ENCODE measurements at regions of chr12 and their contacts with region 1.

Region 1: DNA sequence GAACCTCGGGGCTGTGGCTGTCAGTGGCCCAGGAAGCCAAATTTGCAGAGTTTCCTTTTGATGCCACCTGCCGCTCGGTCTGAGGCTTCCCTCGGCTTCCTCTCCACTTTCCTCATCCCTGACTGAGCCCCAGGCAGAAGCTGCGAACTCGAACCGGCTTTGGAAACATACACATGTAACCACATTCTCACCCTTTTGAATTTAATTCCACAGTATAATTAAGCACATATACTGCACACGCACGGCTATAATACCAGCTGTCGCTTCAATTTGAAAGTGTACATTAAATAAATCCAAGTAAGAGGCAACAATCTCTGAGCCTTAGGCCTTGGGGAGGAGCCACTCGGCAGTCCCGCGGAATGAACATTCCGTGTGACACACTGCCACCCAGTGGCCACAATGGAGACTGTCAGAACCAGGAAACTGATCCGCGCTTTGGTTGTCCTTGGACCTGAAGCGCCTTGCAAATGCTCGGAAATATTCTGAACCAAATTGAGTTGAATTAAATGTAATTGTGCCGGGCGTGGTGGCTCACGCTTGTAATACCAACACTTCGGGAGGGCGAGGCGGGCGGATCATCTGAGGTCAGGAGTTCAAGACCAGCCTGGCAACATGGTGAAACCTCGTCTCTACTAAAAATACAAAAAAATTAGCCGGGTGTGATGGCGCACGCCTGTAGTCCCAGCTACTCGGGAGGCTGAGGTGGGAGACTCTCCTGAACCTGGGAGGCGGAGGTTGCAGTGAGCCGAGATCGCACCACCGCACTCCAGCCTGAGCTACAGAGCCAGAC is 117.9 kb upstream of the TMPO start:
- DNase-seq: peak; percentile 84
- H3K4me3 ChIP-seq: peak overlapping the region in 2 of 3 experiments; percentile 28 to 35
- H3K27ac ChIP-seq: no peak overlapping the region
- H3K4me1 ChIP-seq: peaks cover 39% of the 10 kb centered on the region
- H3K27me3 ChIP-seq: no peaks in the 10 kb centered on the region
- CTCF ChIP-seq: peak; percentile 76 to 84
- POLR2A ChIP-seq: no peak

Region 2: DNA sequence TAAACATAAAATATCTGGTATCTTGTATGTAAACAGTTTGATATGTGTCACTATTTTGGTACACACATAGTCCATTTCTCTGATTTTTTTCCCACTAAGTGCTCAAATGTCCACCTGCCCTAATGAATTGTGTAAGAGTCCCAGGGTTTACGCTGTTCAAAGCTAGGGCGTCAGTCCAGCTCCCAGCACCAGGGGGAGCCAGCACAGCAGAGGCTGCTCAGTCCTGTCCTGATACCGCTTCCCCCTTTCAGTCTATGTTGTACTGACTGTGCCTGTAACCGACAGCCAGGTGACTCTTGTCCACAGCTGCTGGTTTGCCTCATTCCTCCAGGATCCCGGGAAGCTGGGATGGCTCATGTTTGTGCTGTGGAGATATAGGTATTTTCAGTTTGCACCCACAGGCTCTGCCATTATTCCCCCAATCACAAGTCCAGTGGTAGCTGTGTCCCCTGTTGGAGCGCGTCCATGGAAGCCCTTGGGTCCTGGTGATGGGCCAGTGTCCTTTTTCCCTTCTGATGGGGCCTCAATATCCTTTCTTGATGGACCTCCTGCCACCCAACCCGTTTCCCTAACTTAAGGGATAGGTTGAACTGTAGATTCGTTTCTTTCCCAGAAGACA is 1248.5 kb before region 1 on chr12:
- CTCF ChIA-PET with region 1: interaction called, 10 read pairs
- POLR2A ChIA-PET with region 1: no interaction called
- dilution Hi-C with region 1: no loop called
- intact Hi-C with region 1: loop called (anchors 2 kb)
- DNase-seq: peak; percentile 31
- H3K4me3 ChIP-seq: no peak overlapping the region
- H3K27ac ChIP-seq: no peak overlapping the region
- H3K4me1 ChIP-seq: peaks cover 20% of the 10 kb centered on the region
- H3K27me3 ChIP-seq: no peaks in the 10 kb centered on the region
- CTCF ChIP-seq: peak; percentile 65 to 75
- POLR2A ChIP-seq: no peak

Region 3: DNA sequence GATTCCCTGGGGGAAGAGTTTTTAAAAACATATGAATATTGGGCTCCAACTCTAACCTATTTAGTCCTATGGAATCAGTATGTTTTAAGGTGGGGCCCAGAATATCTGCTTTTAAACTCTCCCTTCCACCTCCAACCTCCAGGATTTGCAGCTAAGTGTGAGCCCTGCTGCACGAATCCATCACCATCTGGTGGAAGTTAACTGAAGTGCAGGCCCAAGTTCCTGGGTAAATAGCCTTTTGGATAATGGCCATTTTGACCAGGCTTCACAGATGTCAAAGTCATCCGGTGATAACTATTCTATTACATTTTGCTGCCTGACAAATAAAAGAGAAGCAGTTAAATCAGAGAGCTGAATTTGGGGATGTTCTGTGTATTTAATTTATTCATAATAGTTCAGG is 993.0 kb before region 1 on chr12:
- CTCF ChIA-PET with region 1: no interaction called
- POLR2A ChIA-PET with region 1: no interaction called
- dilution Hi-C with region 1: no loop called
- intact Hi-C with region 1: loop called (anchors 10 kb)
- DNase-seq: peak; percentile 44
- H3K4me3 ChIP-seq: no peak overlapping the region
- H3K27ac ChIP-seq: no peak overlapping the region
- H3K4me1 ChIP-seq: no peaks in the 10 kb centered on the region
- H3K27me3 ChIP-seq: no peaks in the 10 kb centered on the region
- CTCF ChIP-seq: peak; percentile 58 to 65
- POLR2A ChIP-seq: no peak

Region 4: GRCh38 chr12:98227162-98227561 is 170.3 kb before region 1 on chr12:
- CTCF ChIA-PET with region 1: interaction called, 12 read pairs
- POLR2A ChIA-PET with region 1: no interaction called
- dilution Hi-C with region 1: no loop called
- intact Hi-C with region 1: loop called (anchors 2 kb)
- DNase-seq: no peak
- H3K4me3 ChIP-seq: no peak overlapping the region
- H3K27ac ChIP-seq: no peak overlapping the region
- H3K4me1 ChIP-seq: no peaks in the 10 kb centered on the region
- H3K27me3 ChIP-seq: peaks cover 0 to 2% of the 10 kb centered on the region in 2 experiments
- CTCF ChIP-seq: peak in 1 of 2 donors; percentile 31
- POLR2A ChIP-seq: no peak

Region 5: DNA sequence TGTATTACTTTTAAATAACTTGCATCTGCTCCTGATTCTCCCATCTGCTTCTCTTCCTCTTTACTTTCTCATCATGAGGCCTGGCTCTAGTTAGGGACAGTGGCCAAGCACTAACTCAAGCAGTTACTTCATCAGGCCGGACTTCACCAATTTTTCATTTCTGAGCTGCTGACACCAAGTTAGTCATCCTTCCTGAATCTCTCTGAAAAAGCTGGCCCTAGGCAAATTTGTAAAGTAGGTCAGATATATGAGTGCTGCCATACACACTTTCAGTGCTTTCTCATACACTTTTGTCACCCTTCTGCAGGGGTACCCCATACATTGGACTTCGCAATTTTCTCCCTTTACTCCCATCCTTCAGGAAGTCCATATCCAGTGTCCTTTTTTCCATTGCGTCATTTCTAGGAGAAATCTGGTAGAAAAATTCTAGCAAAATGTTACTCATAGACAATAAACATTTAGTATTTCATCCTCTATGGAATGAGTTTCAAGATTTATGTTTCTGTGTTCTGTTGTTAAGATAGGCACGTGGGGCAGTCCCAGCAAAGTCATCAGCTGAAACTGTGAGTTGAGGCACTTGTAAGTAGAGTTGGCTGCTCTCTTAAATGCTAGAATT is 158.9 kb before region 1 on chr12:
- CTCF ChIA-PET with region 1: no interaction called
- POLR2A ChIA-PET with region 1: no interaction called
- dilution Hi-C with region 1: no loop called
- intact Hi-C with region 1: no loop called
- DNase-seq: no peak
- H3K4me3 ChIP-seq: no peak overlapping the region
- H3K27ac ChIP-seq: no peak overlapping the region
- H3K4me1 ChIP-seq: no peaks in the 10 kb centered on the region
- H3K27me3 ChIP-seq: peaks cover 0 to 2% of the 10 kb centered on the region in 2 experiments
- CTCF ChIP-seq: no peak
- POLR2A ChIP-seq: no peak

Region 6: GRCh38 chr12:98360401-98360800 is 37.1 kb before region 1 on chr12:
- CTCF ChIA-PET with region 1: no interaction called
- POLR2A ChIA-PET with region 1: no interaction called
- dilution Hi-C with region 1: no loop called
- intact Hi-C with region 1: no loop called
- DNase-seq: no peak
- H3K4me3 ChIP-seq: no peak overlapping the region
- H3K27ac ChIP-seq: no peak overlapping the region
- H3K4me1 ChIP-seq: no peaks in the 10 kb centered on the region
- H3K27me3 ChIP-seq: peaks cover 0 to 2% of the 10 kb centered on the region in 2 experiments
- CTCF ChIP-seq: no peak
- POLR2A ChIP-seq: no peak

Region 7: GRCh38 chr12:98439981-98440581 is 42.6 kb after region 1 on chr12:
- CTCF ChIA-PET with region 1: interaction called, 3 read pairs
- POLR2A ChIA-PET with region 1: no interaction called
- dilution Hi-C with region 1: no loop called
- intact Hi-C with region 1: loop called (anchors 1 kb)
- DNase-seq: peak; percentile 95
- H3K4me3 ChIP-seq: peak overlapping the region in 1 of 3 experiments; percentile 21
- H3K27ac ChIP-seq: peak overlapping the region; percentile 88
- H3K4me1 ChIP-seq: peaks cover 18% of the 10 kb centered on the region
- H3K27me3 ChIP-seq: no peaks in the 10 kb centered on the region
- CTCF ChIP-seq: no peak
- POLR2A ChIP-seq: no peak

Region 8: DNA sequence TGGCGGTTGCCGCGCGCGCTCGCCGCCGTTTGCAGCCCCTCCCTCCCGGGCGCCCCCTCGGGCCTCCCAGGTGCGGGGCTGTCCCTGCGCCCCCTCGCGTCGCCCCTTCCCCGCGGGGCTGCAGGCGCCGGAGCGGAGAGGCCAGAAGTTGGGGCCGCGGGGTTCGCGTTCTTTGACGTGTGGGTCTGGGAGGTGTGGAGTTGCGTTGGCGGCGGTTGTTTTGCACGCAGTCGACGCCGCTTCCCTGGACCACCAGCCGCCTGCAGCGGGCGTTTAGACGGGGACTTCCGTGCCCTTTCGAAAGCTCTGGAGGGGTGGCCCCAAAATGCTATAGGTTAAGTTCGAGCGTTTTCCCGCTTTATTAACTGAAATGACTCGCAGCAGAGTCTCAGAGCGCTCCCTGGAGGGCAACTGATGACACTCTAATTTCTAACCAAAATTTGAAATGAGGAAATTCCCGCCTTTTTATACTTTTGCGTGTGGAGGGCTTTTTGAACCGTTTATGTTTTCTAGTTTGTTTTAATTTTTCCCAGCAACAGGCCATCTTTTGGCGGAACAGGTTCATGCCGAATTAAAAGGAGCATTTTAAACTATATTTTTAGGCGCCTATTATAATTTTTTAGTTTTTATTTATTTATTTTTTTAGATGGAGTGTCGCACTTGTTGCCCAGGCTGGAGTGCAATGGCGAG is 118.8 kb after region 1 on chr12:
- CTCF ChIA-PET with region 1: no interaction called
- POLR2A ChIA-PET with region 1: no interaction called
- dilution Hi-C with region 1: no loop called
- intact Hi-C with region 1: loop called (anchors 1 kb)
- DNase-seq: peak; percentile 78
- H3K4me3 ChIP-seq: peak overlapping the region; percentile 60 to 99 (median 97)
- H3K27ac ChIP-seq: peak overlapping the region; percentile 85
- H3K4me1 ChIP-seq: peaks cover 16% of the 10 kb centered on the region
- H3K27me3 ChIP-seq: no peaks in the 10 kb centered on the region
- CTCF ChIP-seq: peak; percentile 58 to 61
- POLR2A ChIP-seq: no peak

Measured in endothelial cell of umbilical vein (primary cell).